Activated T-helper 1 cell treated with anti-CD3 and anti-CD28 coated beads, Interleukin-12 subunit alpha, Interleukin-12 subunit beta, Interleukin-2, Interleukin-4 antibody, amounts not matched to agents 30 ng/mL and 10 ng/mL and 1 ng/mL, durations not matched to agents 14 hours and 24 hours and 36 hours (primary cell): ENCODE measurements at regions of chr5 and their contacts with region 1.

Region 1: GRCh38 chr5:115841382-115842088 is at the starts of genes AP3S1 and ATG12:
- DNase-seq: peak; percentile 87
- H3K4me3 Mint-ChIP-seq: peak within 1 kb of the TSS; percentile 98
- H3K27ac Mint-ChIP-seq: peak within 1 kb of the TSS; percentile 99
- H3K4me1 Mint-ChIP-seq: peaks cover 52% of the 10 kb centered on the region
- H3K27me3 Mint-ChIP-seq: no peaks in the 10 kb centered on the region
- total RNA-seq, gene AP3S1: 49.7 and 53.5 TPM in 2 replicates
- total RNA-seq, gene ATG12: 29.6 and 37.4 TPM in 2 replicates

Region 2: DNA sequence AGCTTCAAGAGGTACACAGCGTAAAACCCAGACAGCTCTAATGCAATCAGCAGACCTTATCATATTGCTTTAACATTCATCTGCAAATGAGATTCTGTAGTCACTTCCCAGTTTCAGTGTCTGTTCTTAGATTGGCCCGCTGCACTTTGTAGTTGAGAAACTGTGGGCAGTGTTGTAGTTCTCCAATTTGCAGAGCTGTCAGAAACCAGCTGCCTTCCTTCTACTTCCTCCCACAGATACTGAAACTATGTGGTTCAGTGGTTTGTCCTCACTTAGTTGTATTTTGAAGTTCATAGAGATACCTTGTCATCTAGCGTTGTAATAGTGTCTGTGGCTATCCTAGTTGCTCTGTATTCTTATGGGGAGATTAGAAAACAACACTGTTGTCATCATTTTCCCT is 632.3 kb before region 1 on chr5:
- intact Hi-C with region 1: loop called (anchors 1 kb)
- DNase-seq: peak; percentile 59
- H3K4me3 Mint-ChIP-seq: no peak overlapping the region
- H3K27ac Mint-ChIP-seq: peak overlapping the region; percentile 28
- H3K4me1 Mint-ChIP-seq: peaks cover 17% of the 10 kb centered on the region
- H3K27me3 Mint-ChIP-seq: no peaks in the 10 kb centered on the region

Region 3: GRCh38 chr5:115309751-115310370 is 531.7 kb before region 1 on chr5:
- intact Hi-C with region 1: loop called (anchors 2 kb)
- DNase-seq: no peak
- H3K4me3 Mint-ChIP-seq: no peak overlapping the region
- H3K27ac Mint-ChIP-seq: no peak overlapping the region
- H3K4me1 Mint-ChIP-seq: no peaks in the 10 kb centered on the region
- H3K27me3 Mint-ChIP-seq: peaks cover 32% of the 10 kb centered on the region

Region 4: DNA sequence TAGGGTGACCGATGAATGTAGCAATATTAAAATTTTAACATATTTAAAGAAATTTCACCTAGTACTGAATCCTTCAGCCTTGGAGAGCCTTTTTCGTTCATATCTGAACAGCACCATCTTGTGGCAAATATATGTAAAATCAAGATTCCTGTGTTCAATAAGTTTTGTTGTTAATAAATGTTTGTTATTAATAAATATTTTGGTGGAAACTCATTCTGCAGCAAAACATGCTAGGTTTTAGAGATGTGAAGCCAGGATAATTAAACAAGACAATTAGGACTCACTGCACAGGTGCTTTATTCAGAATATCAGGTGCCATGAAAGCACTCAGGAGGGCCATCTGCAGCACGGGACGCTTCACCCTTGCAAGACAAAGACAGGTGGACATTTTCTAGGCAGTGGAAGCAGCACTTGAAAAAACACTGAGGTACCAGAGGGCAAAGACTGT is 254.9 kb before region 1 on chr5:
- intact Hi-C with region 1: loop called (anchors 1 kb)
- DNase-seq: no peak
- H3K4me3 Mint-ChIP-seq: no peak overlapping the region
- H3K27ac Mint-ChIP-seq: no peak overlapping the region
- H3K4me1 Mint-ChIP-seq: peaks cover 2% of the 10 kb centered on the region
- H3K27me3 Mint-ChIP-seq: peaks cover 2% of the 10 kb centered on the region

Region 5: DNA sequence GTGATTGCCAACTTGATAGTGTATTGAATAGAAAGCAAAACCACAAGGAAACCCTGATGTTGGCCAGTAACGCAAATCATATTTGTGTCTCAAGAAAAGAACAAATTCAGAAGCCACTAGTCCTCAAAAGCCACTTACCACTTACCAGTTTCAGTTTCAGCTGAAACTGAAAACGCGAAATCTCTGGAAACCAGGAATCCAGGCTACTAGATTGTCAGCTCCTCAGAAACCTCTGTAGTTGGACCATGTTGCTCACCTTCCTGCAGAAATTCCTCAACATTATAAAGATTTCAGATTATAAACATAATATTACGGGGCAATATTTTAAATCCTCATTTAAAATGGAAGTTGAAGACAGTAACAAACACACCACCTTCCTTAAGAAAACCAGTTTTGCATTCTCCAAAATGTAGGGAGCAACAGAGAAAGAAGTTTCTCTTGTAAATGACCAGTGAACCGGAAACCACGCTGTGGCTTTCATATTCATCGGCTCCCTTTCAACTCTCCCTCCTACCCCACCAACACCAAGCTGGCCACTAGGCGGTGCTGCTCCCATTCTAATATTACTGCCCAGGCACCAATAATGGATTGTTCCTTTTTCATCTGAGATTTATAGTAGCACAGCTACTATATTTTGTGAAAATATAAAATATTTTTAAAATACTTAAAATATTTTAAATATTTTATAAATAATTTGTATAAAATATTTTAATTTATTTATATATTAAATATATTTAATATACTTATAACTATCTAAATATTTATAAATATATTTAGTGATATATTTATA is 207.0 kb before region 1 on chr5:
- intact Hi-C with region 1: loop called (anchors 1 kb)
- DNase-seq: peak; percentile 67
- H3K4me3 Mint-ChIP-seq: peak overlapping the region; percentile 24
- H3K27ac Mint-ChIP-seq: no peak overlapping the region
- H3K4me1 Mint-ChIP-seq: peaks cover 48% of the 10 kb centered on the region
- H3K27me3 Mint-ChIP-seq: peaks cover 63% of the 10 kb centered on the region

Region 6: DNA sequence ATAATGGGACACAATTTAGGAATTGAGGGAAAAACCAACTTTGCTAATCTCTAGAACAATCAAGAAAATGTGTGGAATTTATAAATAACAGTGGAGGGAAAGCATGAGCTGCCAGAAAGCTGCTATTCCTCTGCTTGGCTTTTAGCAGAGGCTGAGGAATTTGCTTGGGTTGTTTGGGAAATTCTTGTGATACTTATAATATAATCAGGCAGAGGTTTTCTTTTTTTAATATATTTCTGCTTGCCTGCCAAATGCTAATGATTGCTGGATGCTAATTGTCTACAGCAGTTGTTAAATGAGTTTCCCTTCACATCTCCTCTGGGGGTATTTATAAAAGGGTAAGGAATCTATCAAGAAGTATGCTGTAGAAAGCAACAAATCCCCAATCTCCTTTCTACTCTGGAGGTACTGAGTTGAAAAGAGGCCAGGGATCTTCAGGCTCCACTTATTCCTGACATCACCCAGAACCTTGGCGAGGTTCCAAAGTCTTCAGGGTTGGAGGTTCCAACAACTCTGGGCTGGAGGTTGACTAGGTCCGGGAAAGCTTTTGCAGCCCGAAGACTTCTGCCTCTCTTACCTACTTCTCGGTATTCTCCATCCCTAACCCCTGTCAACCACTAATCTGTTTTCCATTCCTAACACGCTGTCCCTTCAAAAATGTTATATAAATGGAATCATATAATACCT is 155.3 kb before region 1 on chr5:
- intact Hi-C with region 1: no loop called
- DNase-seq: no peak
- H3K4me3 Mint-ChIP-seq: no peak overlapping the region
- H3K27ac Mint-ChIP-seq: no peak overlapping the region
- H3K4me1 Mint-ChIP-seq: no peaks in the 10 kb centered on the region
- H3K27me3 Mint-ChIP-seq: peaks cover 16% of the 10 kb centered on the region

Region 7: GRCh38 chr5:115907177-115907576 is 65.6 kb after region 1 on chr5:
- intact Hi-C with region 1: no loop called
- DNase-seq: no peak
- H3K4me3 Mint-ChIP-seq: no peak overlapping the region
- H3K27ac Mint-ChIP-seq: no peak overlapping the region
- H3K4me1 Mint-ChIP-seq: no peaks in the 10 kb centered on the region
- H3K27me3 Mint-ChIP-seq: no peaks in the 10 kb centered on the region

Region 8: GRCh38 chr5:115962503-115963402 is 121.2 kb after region 1 on chr5:
- intact Hi-C with region 1: no loop called
- DNase-seq: no peak
- H3K4me3 Mint-ChIP-seq: no peak overlapping the region
- H3K27ac Mint-ChIP-seq: no peak overlapping the region
- H3K4me1 Mint-ChIP-seq: no peaks in the 10 kb centered on the region
- H3K27me3 Mint-ChIP-seq: peaks cover 55% of the 10 kb centered on the region

Region 9: GRCh38 chr5:116084871-116085715 is 243.6 kb after region 1 on chr5 and contains the start of gene COMMD10:
- intact Hi-C with region 1: loop called (anchors 1 kb)
- DNase-seq: peak; percentile 72
- H3K4me3 Mint-ChIP-seq: peak within 1 kb of the TSS; percentile 89
- H3K27ac Mint-ChIP-seq: peak within 1 kb of the TSS; percentile 86
- H3K4me1 Mint-ChIP-seq: peaks cover 30% of the 10 kb centered on the region
- H3K27me3 Mint-ChIP-seq: peaks cover 4% of the 10 kb centered on the region
- total RNA-seq, gene COMMD10: 21.8 and 23.6 TPM in 2 replicates

Region 10: GRCh38 chr5:116388564-116389258 is 547.2 kb after region 1 on chr5:
- intact Hi-C with region 1: no loop called
- DNase-seq: no peak
- H3K4me3 Mint-ChIP-seq: no peak overlapping the region
- H3K27ac Mint-ChIP-seq: no peak overlapping the region
- H3K4me1 Mint-ChIP-seq: no peaks in the 10 kb centered on the region
- H3K27me3 Mint-ChIP-seq: no peaks in the 10 kb centered on the region